ENCODE measurements at regions of chr1 and their contacts with region 1.

Region 1: DNA sequence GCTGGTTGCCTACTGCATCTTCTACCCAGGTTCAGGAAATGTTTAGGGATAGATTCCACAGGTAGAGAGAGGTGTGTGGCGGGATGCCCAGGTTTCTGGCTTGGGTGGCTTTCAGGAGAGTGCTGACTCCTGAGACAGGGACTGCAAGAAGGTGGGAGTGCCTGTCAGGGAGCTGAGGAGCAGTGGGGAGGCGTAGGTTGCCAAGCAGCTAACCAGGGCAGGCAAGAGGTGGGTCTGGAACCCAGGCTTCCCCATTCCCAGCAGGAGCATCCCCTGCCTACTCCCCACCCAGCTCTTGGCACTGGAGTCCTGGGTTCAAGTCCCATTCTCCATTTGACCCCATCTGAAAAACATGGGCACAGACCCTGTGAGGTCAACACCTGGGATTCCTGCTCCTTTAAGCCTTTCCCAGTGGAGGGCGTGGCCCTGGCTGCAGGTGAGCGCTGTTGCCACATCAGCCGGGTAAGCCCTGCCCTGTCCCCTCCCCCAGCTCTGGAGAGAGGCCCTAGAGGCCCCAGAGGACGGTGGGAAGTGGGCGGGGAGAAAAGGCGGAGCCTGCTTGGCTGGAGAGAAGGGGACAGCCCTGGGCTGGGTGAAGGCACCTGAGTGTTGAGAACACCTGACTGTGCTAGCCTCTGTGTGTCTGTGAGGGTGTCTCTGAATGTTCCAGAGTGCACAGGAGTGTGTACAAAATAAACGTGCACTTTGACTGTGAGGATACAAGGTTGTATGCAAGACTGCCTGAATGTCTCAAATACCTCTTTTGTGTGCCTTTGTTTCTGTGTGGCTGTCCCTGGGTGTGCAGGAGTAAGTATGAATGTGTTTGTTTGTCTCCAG is 14.0 kb upstream of the SYNC start:
- DNase-seq: peak; percentile 70
- H3K4me3 ChIP-seq: no peak overlapping the region
- H3K27ac ChIP-seq: no peak overlapping the region; a peak in 1 of 4 replicates
- H3K4me1 ChIP-seq: peaks cover 0 to 4% of the 10 kb centered on the region in 2 experiments; a peak in 1 of 4 replicates
- H3K27me3 ChIP-seq: no peaks in the 10 kb centered on the region
- CTCF ChIP-seq: no peak
- EP300 ChIP-seq: no peak
- RAD21 ChIP-seq: no peak

Region 2: DNA sequence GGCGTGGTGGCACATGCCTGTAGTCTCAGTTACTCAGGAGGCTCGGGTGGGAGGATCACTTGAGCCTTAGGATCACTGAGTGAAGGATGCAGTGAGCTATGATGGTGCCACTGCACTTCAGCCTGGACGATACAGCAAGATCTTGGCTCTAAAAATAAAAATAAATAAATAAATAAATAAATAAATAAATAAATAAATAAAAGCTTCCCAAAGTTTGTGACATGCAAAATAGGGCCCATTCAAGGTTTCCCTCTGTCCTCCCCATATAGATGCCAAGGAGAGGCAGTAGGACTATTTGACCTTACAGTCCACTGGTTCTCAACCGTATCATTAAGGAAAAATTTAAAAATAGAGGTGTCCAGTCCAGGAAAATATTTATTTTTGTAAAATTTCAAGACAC is 107.3 kb before region 1 on chr1:
- CTCF ChIA-PET with region 1: no interaction called
- POLR2A ChIA-PET with region 1: no interaction called
- DNase-seq: no peak
- H3K4me3 ChIP-seq: no peak overlapping the region
- H3K27ac ChIP-seq: no peak overlapping the region
- H3K4me1 ChIP-seq: peaks cover 0 to 3% of the 10 kb centered on the region in 2 experiments; a peak in 1 of 4 replicates
- H3K27me3 ChIP-seq: no peaks in the 10 kb centered on the region
- CTCF ChIP-seq: no peak
- EP300 ChIP-seq: no peak
- RAD21 ChIP-seq: no peak

Region 3: DNA sequence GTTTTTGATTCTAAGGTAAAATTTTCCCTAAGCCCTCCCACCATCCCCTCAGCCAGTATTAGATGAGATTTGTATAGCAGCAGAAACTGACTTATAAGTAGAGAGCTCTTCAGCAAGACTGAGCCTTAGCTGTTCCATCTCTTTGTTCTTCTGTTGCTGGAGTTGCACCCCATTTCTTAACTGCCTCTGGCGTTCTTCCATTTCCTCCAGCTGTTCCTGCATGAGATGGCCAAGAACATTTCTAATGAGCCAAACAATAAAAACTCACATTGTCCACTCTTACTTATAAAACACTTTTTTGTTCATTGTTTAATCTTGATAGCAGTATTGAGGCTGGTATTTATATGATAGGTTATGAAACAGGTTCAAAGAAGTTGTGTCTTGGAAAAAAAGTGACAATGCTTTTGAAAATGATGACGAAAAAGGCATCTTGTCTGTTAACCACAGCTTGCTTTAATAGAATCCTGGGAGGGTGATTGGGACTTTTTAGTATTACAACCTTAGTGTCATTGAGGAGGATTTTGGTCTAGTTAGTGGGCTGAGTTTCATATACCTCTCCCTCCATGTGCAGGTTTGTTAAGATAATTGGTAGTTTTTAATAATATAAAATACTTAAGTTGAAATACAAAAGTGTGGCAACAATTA is 32.2 kb before region 1 on chr1:
- CTCF ChIA-PET with region 1: interaction called, 12 read pairs
- POLR2A ChIA-PET with region 1: interaction called, 3 read pairs
- DNase-seq: no peak
- H3K4me3 ChIP-seq: no peak overlapping the region
- H3K27ac ChIP-seq: no peak overlapping the region
- H3K4me1 ChIP-seq: no peaks in the 10 kb centered on the region
- H3K27me3 ChIP-seq: no peaks in the 10 kb centered on the region
- CTCF ChIP-seq: no peak
- EP300 ChIP-seq: no peak
- RAD21 ChIP-seq: no peak

Region 4: GRCh38 chr1:32702599-32703478 is 13.7 kb before region 1 on chr1 and contains the start of gene SYNC:
- CTCF ChIA-PET with region 1: interaction called, 74 read pairs
- POLR2A ChIA-PET with region 1: no interaction called
- DNase-seq: peak; percentile 86
- H3K4me3 ChIP-seq: peak within 1 kb of the TSS; percentile 58 to 81
- H3K27ac ChIP-seq: peak within 1 kb of the TSS in 1 of 2 experiments; percentile 92; a peak in 2 of 4 replicates
- H3K4me1 ChIP-seq: peaks cover 9 to 13% of the 10 kb centered on the region in 2 experiments; a peak in 3 of 4 replicates
- H3K27me3 ChIP-seq: no peaks in the 10 kb centered on the region
- CTCF ChIP-seq: no peak
- EP300 ChIP-seq: no peak; a peak in 1 of 4 replicates
- RAD21 ChIP-seq: no peak
- polyA plus RNA-seq, gene SYNC: 25.6 and 32.0 TPM in 2 replicates

Region 5: GRCh38 chr1:32753532-32754312 is 37.2 kb after region 1 on chr1:
- CTCF ChIA-PET with region 1: interaction called, 13 read pairs
- POLR2A ChIA-PET with region 1: no interaction called
- DNase-seq: peak; percentile 100
- H3K4me3 ChIP-seq: peak overlapping the region; percentile 65 to 71
- H3K27ac ChIP-seq: no peak overlapping the region; a peak in 1 of 4 replicates
- H3K4me1 ChIP-seq: peaks cover 0 to 17% of the 10 kb centered on the region in 2 experiments; a peak in 1 of 4 replicates
- H3K27me3 ChIP-seq: no peaks in the 10 kb centered on the region
- CTCF ChIP-seq: no peak
- EP300 ChIP-seq: no peak
- RAD21 ChIP-seq: no peak

Region 6: DNA sequence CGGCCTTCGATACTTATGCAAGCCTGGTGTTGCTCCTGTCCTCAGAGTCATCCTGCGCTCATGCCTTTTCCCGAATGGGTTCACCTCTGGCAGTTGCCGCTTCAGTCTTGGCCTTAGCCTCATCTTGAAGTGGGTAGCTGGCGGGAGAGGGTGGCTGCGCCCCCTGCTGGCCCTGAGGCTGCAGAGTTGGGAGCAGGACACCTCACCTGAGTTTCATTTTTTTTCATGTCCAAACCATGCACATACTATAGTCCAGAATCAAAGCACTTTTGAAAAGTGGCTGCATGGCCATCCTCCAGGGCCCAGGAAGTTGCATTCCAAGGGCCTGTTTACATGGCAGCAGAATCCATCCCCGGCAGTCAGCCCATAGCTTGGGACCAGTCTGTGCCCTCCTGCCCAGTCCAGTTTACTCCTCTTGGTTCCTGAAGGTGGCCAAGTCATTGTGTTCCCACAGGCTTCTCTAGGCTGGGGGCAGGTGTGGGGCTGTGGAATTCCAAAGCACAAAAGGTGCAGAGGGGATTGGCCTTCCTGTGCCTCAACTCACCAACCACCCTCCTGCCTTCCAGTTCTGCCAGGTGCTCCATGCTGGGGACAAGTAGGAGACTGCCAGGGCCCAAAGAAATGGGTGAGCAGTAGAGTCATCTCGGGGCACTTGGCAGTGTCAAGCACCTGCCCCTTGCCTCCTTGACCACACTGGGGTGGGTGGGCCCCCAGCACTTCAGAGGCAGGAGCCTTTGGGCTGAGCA is 56.7 kb after region 1 on chr1:
- CTCF ChIA-PET with region 1: interaction called, 392 read pairs
- POLR2A ChIA-PET with region 1: no interaction called
- DNase-seq: peak; percentile 84
- H3K4me3 ChIP-seq: no peak overlapping the region; a peak in 1 of 4 replicates
- H3K27ac ChIP-seq: peak overlapping the region in 1 of 2 experiments; percentile 85; a peak in 2 of 4 replicates
- H3K4me1 ChIP-seq: peaks cover 16 to 26% of the 10 kb centered on the region in 2 experiments
- H3K27me3 ChIP-seq: no peaks in the 10 kb centered on the region
- CTCF ChIP-seq: peak; percentile 94
- EP300 ChIP-seq: no peak
- RAD21 ChIP-seq: peak; percentile 85

Region 7: DNA sequence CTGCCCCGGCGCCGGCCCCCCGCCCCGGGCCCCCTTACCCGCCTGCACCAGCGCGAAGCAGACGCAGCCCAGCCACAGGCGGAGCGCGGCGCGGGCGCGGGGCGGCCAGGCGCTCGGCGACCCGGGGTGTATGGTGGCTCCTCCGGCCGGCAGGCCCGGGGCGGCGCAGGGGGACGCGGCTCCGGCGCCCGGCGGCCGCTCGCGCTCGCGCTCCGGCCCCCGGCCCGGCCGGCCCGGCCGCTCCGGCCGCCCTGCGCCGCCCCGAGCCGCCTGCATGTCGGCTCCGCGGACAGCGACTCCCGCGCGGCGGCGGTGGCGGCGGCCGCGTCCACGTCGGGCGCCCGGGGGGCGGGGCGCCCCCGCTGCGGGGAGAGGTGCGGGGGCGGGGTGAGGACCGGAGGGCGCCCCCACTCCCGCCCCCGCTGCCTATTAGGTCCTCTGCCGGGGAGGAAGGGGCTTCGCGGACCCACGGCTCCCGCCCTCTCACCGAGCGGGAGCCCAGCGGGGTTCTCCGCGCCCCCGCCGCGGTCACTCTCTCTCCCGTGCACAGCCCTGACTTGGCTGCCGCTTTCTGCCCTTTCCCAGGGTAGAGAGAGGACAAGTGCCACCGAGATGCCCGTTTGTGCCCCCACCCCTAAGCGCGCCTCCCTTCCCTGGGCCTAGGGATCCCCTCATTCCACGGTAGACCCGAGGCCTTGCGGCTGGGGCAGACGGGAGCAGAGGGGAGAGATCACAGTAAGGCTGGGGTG is 154.3 kb after region 1 on chr1 and contains the start of gene FNDC5:
- CTCF ChIA-PET with region 1: interaction called, 35 read pairs
- POLR2A ChIA-PET with region 1: no interaction called
- DNase-seq: peak; percentile 89
- H3K4me3 ChIP-seq: peak within 1 kb of the TSS in 1 of 2 experiments; percentile 46; a peak in 3 of 4 replicates
- H3K27ac ChIP-seq: no peak within 1 kb of the TSS
- H3K4me1 ChIP-seq: peaks cover 0 to 13% of the 10 kb centered on the region in 2 experiments; a peak in 1 of 4 replicates
- H3K27me3 ChIP-seq: no peaks in the 10 kb centered on the region
- CTCF ChIP-seq: no peak
- EP300 ChIP-seq: no peak
- RAD21 ChIP-seq: no peak
- polyA plus RNA-seq, gene FNDC5: 0.59 and 0.94 TPM in 2 replicates

Region 8: DNA sequence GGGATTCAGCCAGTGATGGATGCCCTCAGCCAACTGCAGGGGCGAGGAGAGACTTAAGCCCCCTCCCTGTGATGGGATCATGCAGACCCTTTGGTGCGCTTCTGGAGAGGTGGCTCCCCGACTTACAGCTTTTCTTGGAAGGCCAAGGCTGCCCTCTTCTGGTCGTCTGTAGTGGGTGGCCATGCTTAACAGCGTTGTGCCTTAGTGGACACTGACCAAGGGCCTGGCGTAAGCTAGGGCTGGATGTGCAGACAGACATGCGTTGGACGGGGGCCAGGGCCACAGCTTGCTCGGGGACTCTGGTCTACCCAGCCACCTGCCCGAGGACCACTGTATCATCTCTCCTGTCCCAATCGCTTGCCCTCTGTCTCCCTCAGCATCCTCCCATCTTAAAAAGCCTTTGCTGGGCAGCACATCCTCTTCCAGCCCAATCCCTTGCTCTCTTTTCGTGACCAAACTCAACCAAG is 369.9 kb after region 1 on chr1:
- CTCF ChIA-PET with region 1: interaction called, 18 read pairs
- POLR2A ChIA-PET with region 1: no interaction called
- DNase-seq: peak; percentile 80
- H3K4me3 ChIP-seq: no peak overlapping the region; a peak in 1 of 4 replicates
- H3K27ac ChIP-seq: no peak overlapping the region
- H3K4me1 ChIP-seq: peaks cover 5 to 14% of the 10 kb centered on the region in 2 experiments; a peak in 1 of 4 replicates
- H3K27me3 ChIP-seq: no peaks in the 10 kb centered on the region
- CTCF ChIP-seq: peak; percentile 80
- EP300 ChIP-seq: no peak
- RAD21 ChIP-seq: peak; percentile 93

Measured in SK-N-SH (cell line).